ENCODE measurements at regions of chr15 and their contacts with region 1.

Region 1: GRCh38 chr15:59306520-59307164 is 66.0 kb downstream of the MYO1E start:
- DNase-seq: no peak
- H3K4me3 ChIP-seq: no peak overlapping the region
- H3K27ac ChIP-seq: no peak overlapping the region
- H3K4me1 ChIP-seq: no peaks in the 10 kb centered on the region
- CTCF ChIP-seq: no peak

Region 2: GRCh38 chr15:58951388-58952007 is 355.1 kb before region 1 on chr15:
- CTCF ChIA-PET with region 1: no interaction called
- POLR2A ChIA-PET with region 1: no interaction called
- intact Hi-C with region 1: no loop called
- DNase-seq: no peak
- H3K4me3 ChIP-seq: no peak overlapping the region
- H3K27ac ChIP-seq: no peak overlapping the region
- H3K4me1 ChIP-seq: no peaks in the 10 kb centered on the region
- CTCF ChIP-seq: no peak

Region 3: DNA sequence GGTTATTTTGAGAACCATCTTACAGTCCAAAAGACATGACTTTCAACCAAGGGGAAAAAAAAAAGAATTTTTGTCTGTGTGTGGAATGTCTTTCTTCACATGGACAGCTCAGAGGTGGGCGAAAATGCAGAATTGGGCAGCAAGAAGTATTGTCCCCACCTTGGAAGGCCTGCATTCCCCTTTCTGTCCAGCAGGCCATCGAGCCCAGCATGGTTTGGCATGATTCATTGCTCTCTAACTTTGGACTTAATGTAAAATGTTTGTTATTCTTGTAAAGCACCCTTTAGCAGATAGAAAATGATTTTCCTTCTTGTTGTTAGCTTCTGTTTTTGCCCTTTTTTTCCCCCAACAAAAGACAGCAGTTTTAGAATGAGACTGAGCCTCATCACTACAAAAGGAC is 53.7 kb after region 1 on chr15:
- CTCF ChIA-PET with region 1: no interaction called
- POLR2A ChIA-PET with region 1: no interaction called
- intact Hi-C with region 1: loop called (anchors 5 kb)
- DNase-seq: no peak
- H3K4me3 ChIP-seq: no peak overlapping the region
- H3K27ac ChIP-seq: no peak overlapping the region
- H3K4me1 ChIP-seq: no peaks in the 10 kb centered on the region
- CTCF ChIP-seq: peak; percentile 29; the same call in 1 of the 2 replicates

Region 4: GRCh38 chr15:59594493-59594942 is 287.9 kb after region 1 on chr15:
- CTCF ChIA-PET with region 1: no interaction called
- POLR2A ChIA-PET with region 1: no interaction called
- intact Hi-C with region 1: no loop called
- DNase-seq: no peak
- H3K4me3 ChIP-seq: no peak overlapping the region
- H3K27ac ChIP-seq: no peak overlapping the region
- H3K4me1 ChIP-seq: no peaks in the 10 kb centered on the region
- CTCF ChIP-seq: no peak

Region 5: GRCh38 chr15:59609730-59610712 is 303.4 kb after region 1 on chr15:
- CTCF ChIA-PET with region 1: no interaction called
- POLR2A ChIA-PET with region 1: no interaction called
- intact Hi-C with region 1: no loop called
- DNase-seq: no peak
- H3K4me3 ChIP-seq: no peak overlapping the region
- H3K27ac ChIP-seq: no peak overlapping the region
- H3K4me1 ChIP-seq: peaks cover 4% of the 10 kb centered on the region
- CTCF ChIP-seq: no peak